Right ventricle myocardium superior (tissue), 1 donor: ENCODE measurements at regions of chr20 and their contacts with region 1.

Region 1: GRCh38 chr20:19692685-19693119 is 65.4 kb upstream of the RIN2 start:
- DNase-seq: peak; percentile 74
- ATAC-seq: peak; percentile 26

Region 2: DNA sequence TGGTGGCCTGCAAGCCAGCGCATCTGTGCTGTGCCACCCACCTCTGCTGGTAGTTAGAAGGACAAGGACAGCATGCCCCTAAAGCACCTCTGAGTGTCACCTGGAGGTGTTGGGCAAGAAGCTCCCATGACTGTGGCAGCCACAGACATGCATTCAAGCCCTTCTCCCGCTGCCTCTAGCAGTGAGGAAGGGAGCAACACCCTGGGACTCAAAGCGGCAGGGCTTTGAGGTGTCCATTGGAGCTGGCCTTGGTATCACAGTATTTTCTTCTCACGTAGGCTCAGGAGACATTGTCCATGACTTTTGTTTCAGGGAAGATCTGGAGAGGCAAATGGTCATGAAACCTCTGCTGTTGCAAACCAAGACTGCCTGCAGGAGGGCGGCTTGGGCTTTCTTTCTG is 75.4 kb before region 1 on chr20:
- intact Hi-C with region 1: no loop called
- DNase-seq: no peak
- ATAC-seq: no peak

Region 3: DNA sequence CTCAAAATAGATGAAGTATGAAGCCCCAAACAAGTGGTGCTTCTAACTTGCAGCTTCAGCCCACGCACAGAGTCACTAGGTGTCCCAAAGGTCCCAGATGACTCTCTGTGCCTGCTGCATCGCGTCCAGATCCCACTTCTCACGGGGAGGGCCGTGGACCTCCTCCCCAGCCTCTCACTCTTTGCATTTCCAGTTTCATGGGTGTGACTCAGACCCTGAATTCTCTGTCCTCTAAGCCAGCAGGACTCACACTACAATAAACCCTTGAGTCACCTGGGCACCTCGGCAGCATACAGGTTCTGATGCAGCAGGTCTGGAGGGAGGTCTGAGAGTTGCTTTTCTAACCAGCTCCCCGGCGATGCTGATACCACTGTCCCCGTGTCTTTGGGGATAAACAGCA is 48.6 kb before region 1 on chr20:
- intact Hi-C with region 1: no loop called
- DNase-seq: no peak
- ATAC-seq: no peak

Region 4: DNA sequence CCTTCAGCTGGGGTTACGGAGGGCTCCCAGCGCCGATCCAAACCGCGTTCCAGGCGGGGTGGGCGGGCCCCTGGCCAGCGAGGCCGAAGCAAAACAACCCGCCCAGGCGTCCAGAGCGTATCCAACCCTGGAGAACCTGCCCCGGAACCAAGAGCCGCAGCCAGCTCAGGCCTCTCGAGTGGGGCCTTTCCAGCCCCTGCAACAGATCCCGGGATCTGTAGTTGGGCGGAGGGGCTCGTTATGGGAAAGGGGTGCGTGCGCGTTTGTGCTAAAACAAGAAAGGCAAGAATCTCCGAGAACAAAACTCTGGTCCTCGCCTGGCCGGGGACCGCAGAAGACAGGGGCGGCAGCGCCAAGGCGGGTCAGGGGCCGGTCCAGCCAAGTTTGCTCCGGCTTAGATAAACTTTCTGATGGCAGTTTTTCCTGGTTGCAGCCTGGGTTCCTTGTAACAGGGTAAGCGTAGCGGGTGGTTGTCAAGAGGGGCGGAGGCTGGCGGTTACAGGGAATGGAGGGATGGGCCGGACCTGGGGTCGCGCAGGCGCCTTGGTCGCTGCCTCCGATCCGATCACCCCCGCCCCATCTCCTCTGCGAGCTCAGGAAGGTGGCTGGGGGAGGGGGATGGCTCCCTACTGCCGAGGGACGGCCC is 64.9 kb after region 1 on chr20:
- intact Hi-C with region 1: loop called (anchors 5 kb)
- DNase-seq: peak; percentile 94
- ATAC-seq: peak; percentile 85

Region 5: GRCh38 chr20:19784511-19785172 is 91.9 kb after region 1 on chr20:
- intact Hi-C with region 1: loop called (anchors 10 kb)
- DNase-seq: peak; percentile 58
- ATAC-seq: peak; percentile 79

Region 6: GRCh38 chr20:19802492-19803158 is 109.9 kb after region 1 on chr20:
- intact Hi-C with region 1: loop called (anchors 5 kb)
- DNase-seq: no peak
- ATAC-seq: peak; percentile 63

Region 7: GRCh38 chr20:19995220-19995863 is 302.6 kb after region 1 on chr20:
- intact Hi-C with region 1: loop called (anchors 10 kb)
- DNase-seq: no peak
- ATAC-seq: peak; percentile 41